ENCODE measurements at regions of chr6 and their contacts with region 1.

Region 1: DNA sequence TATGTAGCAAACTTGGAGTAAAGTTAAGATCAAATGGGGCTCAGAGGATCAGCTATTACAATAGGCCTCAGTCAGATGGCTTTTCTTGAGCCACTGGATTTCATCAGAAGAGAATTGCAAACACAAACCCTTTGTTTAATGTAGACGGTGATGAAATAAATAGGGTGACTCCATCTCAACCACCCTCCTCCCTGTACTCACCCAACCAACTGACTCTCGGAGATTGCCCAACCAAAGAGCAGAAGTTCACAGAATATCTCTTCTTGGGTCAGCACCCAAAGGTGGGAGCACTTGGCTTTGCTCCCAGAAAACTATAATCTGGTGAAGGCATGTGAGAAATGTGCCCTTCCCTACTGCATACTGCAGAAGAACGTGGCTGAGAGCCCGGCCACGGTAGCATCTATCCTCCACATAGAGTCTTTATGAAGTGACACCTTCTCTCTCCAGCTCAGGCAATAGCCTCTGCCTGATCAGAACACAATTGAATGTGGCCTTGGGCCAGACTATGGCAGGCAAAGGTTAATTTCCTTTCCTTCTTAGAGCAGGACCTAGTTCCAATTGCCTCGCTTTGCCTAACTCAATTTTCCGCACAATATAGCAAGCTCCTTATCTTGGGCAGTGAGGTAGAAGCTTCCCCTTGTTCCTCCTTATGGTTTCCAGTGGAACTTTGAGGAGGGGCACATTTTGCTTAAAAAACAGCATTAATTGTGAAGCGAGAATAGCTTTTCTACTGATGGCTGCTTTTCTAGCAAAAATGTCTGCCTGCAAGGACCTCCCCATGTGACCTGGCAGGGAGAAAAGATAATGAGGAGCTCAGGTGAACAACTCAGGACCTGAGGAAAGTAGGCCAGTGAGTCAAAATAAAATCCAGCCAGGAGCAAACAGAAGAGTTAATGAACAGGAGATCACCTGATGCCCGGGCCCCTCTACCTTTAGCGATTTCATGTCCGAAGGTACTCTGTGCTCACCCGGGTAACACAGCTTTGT is 79.4 kb downstream of the GFOD1 start:
- DNase-seq: peak; percentile 68
- ATAC-seq: peak; percentile 50 to 79

Region 2: GRCh38 chr6:13355043-13355951 is 52.7 kb before region 1 on chr6:
- intact Hi-C with region 1: loop called in 1 of 2 experiments (anchors 10 kb)
- DNase-seq: no peak
- ATAC-seq: peak; percentile 8 to 78